Activated T-helper 2 cell treated with anti-CD3 and anti-CD28 coated beads, Interferon-gamma antibody, Interleukin-2, Interleukin-4, amounts not matched to agents 10 μg/mL and 5 μg/mL and 100 μg/mL, durations not matched to agents 14 hours and 24 hours and 36 hours (primary cell): ENCODE measurements at regions of chr3 and their contacts with region 1.

Region 1: GRCh38 chr3:194682694-194683310 is 2.9 kb upstream of the FAM43A start:
- DNase-seq: peak; percentile 61
- H3K4me3 Mint-ChIP-seq: no peak overlapping the region
- H3K27ac Mint-ChIP-seq: no peak overlapping the region
- H3K4me1 Mint-ChIP-seq: peaks cover 39% of the 10 kb centered on the region
- H3K27me3 Mint-ChIP-seq: peaks cover 30% of the 10 kb centered on the region

Region 2: GRCh38 chr3:193960487-193961274 is 722.1 kb before region 1 on chr3:
- intact Hi-C with region 1: loop called (anchors 10 kb)
- DNase-seq: no peak
- H3K4me3 Mint-ChIP-seq: no peak overlapping the region
- H3K27ac Mint-ChIP-seq: no peak overlapping the region
- H3K4me1 Mint-ChIP-seq: peaks cover 24% of the 10 kb centered on the region
- H3K27me3 Mint-ChIP-seq: peaks cover 58% of the 10 kb centered on the region

Region 3: GRCh38 chr3:194422188-194422587 is 260.6 kb before region 1 on chr3:
- intact Hi-C with region 1: no loop called
- DNase-seq: no peak
- H3K4me3 Mint-ChIP-seq: no peak overlapping the region
- H3K27ac Mint-ChIP-seq: no peak overlapping the region
- H3K4me1 Mint-ChIP-seq: no peaks in the 10 kb centered on the region
- H3K27me3 Mint-ChIP-seq: no peaks in the 10 kb centered on the region

Region 4: DNA sequence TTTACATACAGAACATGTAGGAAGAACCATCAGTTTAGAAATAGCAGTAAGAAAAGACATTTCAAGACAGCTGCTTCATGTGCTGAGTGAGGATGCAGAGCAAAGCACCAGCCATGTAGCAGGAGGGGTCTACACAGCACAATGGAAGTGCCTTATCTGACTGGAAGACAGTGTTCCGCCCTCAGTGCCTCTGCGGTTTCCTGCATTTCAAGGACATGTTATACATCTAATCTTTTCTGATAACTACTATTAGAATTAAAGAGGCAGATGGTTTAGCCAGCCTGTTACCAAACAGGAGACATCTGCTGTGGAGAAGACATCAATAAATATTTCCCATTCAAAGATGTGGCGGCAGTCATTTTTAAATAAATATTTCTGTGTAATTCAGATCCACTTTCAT is 21.4 kb before region 1 on chr3:
- intact Hi-C with region 1: no loop called
- DNase-seq: no peak
- H3K4me3 Mint-ChIP-seq: no peak overlapping the region
- H3K27ac Mint-ChIP-seq: peak overlapping the region; percentile 43
- H3K4me1 Mint-ChIP-seq: peaks cover 40% of the 10 kb centered on the region
- H3K27me3 Mint-ChIP-seq: no peaks in the 10 kb centered on the region

Region 5: DNA sequence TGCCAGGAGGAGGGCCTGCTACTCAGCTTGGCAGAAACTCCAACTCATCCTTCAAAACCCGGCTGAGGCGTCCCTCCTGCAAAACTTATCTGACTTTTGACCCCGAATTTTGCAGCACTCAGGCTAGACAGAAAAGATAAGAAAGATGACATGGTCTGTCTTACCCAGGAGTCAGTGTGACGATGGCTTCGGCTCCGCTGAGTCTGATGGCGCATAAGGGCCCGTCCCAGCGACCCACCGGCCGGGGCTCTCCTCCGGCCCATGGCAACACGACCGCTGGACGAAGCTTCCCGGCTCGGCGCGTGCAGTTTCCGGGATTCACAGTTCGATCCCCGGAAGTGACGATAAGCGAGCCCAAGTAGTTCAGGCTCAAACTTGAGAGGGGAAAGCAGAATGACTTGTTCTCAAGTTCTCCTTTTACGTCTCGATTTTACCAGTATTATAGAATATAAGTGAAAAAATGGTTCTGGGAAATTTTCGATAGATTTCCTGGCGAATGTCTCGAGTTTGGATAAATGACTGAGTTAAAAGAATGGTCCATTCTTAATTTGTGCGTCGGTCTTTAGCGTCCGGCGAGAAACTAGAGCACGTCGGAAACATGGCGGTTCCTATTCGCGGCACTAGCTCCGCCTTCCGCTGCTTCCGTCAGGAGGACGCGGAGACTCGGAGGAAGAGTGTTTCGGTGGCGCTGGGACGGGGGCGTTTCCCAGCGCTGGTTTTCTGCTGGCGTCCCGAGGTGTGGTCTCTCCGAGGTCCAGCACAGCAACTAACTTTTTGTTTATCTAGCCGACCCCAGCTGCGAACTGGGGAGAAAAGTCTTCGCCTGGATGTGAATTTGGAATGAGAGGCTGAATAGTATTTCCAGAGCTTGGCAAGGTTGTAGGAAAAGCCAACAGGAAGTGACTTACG is 10.6 kb before region 1 on chr3 and contains the start of gene LSG1:
- intact Hi-C with region 1: loop called (anchors 1 kb)
- DNase-seq: peak; percentile 83
- H3K4me3 Mint-ChIP-seq: peak within 1 kb of the TSS; percentile 99
- H3K27ac Mint-ChIP-seq: peak within 1 kb of the TSS; percentile 96
- H3K4me1 Mint-ChIP-seq: peaks cover 44% of the 10 kb centered on the region
- H3K27me3 Mint-ChIP-seq: peaks cover 2% of the 10 kb centered on the region
- total RNA-seq, gene LSG1: 52.8 and 53.6 TPM in 2 replicates

Region 6: DNA sequence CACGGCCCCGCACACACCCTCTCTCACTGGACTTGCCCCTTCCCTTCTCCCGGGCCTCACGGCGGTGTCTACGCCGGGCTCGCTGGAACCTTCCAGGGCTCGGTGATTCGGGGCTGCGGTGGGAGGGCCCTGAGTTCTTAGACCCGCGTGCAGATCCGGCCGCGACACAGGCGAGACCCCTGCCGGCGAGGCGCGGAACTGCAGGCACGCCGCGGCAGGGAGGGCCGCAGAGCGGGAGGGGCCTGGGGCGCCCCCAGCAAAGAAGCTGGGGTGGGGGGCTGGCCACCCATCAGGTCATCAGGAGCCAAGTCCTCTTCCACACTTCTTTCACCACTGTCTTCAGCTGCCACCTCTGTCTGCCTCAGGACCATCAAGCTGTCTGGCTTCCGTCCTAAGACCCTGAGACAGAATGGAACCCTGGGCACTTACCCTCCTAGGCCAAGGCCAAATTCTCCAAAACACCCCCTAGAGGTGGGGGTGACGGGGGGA is 423.7 kb after region 1 on chr3:
- intact Hi-C with region 1: loop called (anchors 1 kb)
- DNase-seq: peak; percentile 41
- H3K4me3 Mint-ChIP-seq: no peak overlapping the region
- H3K27ac Mint-ChIP-seq: no peak overlapping the region
- H3K4me1 Mint-ChIP-seq: peaks cover 4% of the 10 kb centered on the region
- H3K27me3 Mint-ChIP-seq: no peaks in the 10 kb centered on the region

Region 7: DNA sequence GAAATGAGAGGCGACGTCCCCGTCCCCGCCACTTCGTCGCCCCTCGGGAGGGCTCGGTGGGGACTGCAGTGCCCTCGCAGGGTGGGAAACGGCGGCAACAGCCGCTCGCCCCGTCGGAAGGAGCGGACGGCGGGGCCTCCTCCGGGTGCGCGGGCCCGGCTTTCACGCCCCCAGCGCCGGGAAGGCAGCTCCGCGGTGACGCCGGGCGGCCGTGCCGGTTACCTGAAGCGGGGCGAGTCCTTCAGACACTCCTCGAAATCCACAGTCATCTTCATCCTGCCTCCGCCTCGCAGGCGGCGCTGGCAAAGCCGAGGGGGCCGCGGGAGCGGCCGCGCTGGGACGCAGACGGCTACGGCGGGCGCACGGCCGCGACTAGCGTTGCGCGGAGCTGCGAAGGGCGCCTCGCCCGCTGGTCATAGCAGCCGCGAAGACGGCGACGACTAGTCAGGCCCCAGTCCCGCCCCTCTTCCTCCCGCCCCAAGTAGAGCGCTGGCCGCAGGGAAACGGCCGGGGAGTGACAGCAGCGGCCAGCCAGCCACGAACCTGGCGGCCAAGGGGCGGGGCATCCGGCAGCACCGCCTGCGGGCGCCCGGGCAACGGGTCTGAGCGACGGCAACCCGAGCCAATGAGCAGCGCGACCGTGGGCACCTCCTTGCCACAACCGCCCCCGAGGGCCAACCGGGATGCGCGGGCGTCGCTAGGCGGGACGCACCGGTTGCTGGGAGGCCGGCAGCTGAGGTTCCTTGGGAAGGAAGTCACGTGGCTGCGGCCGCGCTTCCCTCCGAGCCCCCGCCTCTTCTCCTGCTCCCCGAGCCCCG is 760.0 kb after region 1 on chr3 and contains the start of gene ACAP2:
- intact Hi-C with region 1: loop called (anchors 5 kb)
- DNase-seq: peak; percentile 99
- H3K4me3 Mint-ChIP-seq: peak within 1 kb of the TSS; percentile 94
- H3K27ac Mint-ChIP-seq: peak within 1 kb of the TSS; percentile 85
- H3K4me1 Mint-ChIP-seq: peaks cover 31% of the 10 kb centered on the region
- H3K27me3 Mint-ChIP-seq: no peaks in the 10 kb centered on the region
- total RNA-seq, gene ACAP2: 49.8 and 51.5 TPM in 2 replicates